Endothelial cell of umbilical vein (primary cell): ENCODE measurements at regions of chr3 and their contacts with region 1.

Region 1: GRCh38 chr3:55620351-55621025 is 133.4 kb upstream of the WNT5A start:
- DNase-seq: no peak
- H3K4me3 ChIP-seq: no peak overlapping the region
- H3K27ac ChIP-seq: peak overlapping the region; percentile 49
- H3K4me1 ChIP-seq: peaks cover 15% of the 10 kb centered on the region
- H3K27me3 ChIP-seq: no peaks in the 10 kb centered on the region
- CTCF ChIP-seq: no peak
- POLR2A ChIP-seq: no peak

Region 2: DNA sequence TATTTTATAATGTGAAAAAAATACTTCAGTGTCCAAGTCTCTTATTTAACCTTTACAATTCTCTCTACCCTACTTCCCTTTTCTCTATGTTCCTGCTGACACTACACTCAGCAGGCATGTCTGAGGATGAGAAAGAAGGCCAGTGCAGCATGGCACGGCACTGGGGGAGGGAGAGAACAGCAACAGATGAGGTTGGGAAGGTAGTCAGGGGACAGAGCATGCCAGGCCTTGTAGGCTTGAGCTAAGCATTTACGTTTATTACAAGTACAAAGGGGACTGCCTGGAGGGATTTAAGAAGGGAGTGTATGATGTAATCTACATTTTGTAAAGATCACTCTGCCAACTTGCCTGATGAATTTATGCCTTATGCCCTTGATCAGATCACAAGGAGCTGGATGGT is 16.1 kb before region 1 on chr3:
- CTCF ChIA-PET with region 1: no interaction called
- POLR2A ChIA-PET with region 1: no interaction called
- dilution Hi-C with region 1: no loop called
- intact Hi-C with region 1: loop called (anchors 2 kb)
- DNase-seq: no peak
- H3K4me3 ChIP-seq: no peak overlapping the region
- H3K27ac ChIP-seq: no peak overlapping the region
- H3K4me1 ChIP-seq: peaks cover 12% of the 10 kb centered on the region
- H3K27me3 ChIP-seq: no peaks in the 10 kb centered on the region
- CTCF ChIP-seq: no peak
- POLR2A ChIP-seq: no peak

Region 3: DNA sequence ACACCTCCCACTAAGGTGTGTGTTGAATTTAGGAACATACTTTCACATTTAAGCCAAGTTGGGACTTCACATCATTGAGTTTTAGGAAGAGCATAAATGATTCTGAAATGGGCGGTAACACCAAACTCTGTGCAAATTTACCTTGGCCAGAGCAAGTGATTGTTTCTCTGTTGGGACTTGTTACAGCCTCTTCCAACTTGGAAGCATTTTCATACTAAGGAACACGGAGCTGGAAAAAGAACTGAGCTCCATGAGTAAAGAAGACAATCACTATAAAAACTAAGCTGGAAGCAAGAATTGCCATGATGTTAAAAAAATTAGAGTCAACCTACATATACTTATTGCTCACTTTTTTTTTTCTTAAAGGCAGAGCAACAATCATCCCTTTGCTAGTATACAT is 476.5 kb after region 1 on chr3:
- CTCF ChIA-PET with region 1: no interaction called
- POLR2A ChIA-PET with region 1: no interaction called
- dilution Hi-C with region 1: no loop called
- intact Hi-C with region 1: no loop called
- DNase-seq: no peak
- H3K4me3 ChIP-seq: no peak overlapping the region
- H3K27ac ChIP-seq: no peak overlapping the region
- H3K4me1 ChIP-seq: peaks cover 8% of the 10 kb centered on the region
- H3K27me3 ChIP-seq: no peaks in the 10 kb centered on the region
- CTCF ChIP-seq: no peak
- POLR2A ChIP-seq: no peak